AG04450 (cell line): ENCODE measurements at regions of chr1 and their contacts with region 1.

Region 1: GRCh38 chr1:63674238-63674864 is 81.1 kb downstream of the PGM1 start:
- DNase-seq: peak; percentile 74
- H3K4me3 ChIP-seq: no peak overlapping the region
- H3K27ac ChIP-seq: no peak overlapping the region
- H3K27me3 ChIP-seq: no peaks in the 10 kb centered on the region
- CTCF ChIP-seq: peak; percentile 85

Region 2: DNA sequence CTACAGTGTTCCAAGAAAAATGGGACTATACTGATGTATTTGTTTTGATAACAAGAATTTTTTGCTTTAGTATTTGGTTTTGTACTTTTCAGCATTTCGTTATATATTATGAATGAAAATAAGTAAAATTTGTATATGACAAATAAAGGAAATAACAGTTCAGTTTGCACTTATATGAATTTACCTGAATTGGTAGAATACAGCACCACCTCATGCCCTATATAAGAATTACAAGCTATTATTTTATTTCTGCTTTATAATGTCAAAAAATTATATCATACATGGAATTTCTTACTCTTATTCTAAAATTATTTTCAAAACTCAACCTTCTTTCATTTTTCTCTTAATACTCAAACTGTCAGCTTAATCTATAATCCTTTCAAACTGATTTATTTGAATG is 136.4 kb before region 1 on chr1:
- CTCF ChIA-PET with region 1: no interaction called
- POLR2A ChIA-PET with region 1: no interaction called
- DNase-seq: no peak
- H3K4me3 ChIP-seq: no peak overlapping the region
- H3K27ac ChIP-seq: no peak overlapping the region
- H3K27me3 ChIP-seq: no peaks in the 10 kb centered on the region
- CTCF ChIP-seq: peak; percentile 47

Region 3: GRCh38 chr1:63630666-63631065 is 43.7 kb before region 1 on chr1:
- CTCF ChIA-PET with region 1: no interaction called
- POLR2A ChIA-PET with region 1: no interaction called
- DNase-seq: no peak
- H3K4me3 ChIP-seq: no peak overlapping the region
- H3K27ac ChIP-seq: no peak overlapping the region
- H3K27me3 ChIP-seq: no peaks in the 10 kb centered on the region
- CTCF ChIP-seq: no peak

Region 4: DNA sequence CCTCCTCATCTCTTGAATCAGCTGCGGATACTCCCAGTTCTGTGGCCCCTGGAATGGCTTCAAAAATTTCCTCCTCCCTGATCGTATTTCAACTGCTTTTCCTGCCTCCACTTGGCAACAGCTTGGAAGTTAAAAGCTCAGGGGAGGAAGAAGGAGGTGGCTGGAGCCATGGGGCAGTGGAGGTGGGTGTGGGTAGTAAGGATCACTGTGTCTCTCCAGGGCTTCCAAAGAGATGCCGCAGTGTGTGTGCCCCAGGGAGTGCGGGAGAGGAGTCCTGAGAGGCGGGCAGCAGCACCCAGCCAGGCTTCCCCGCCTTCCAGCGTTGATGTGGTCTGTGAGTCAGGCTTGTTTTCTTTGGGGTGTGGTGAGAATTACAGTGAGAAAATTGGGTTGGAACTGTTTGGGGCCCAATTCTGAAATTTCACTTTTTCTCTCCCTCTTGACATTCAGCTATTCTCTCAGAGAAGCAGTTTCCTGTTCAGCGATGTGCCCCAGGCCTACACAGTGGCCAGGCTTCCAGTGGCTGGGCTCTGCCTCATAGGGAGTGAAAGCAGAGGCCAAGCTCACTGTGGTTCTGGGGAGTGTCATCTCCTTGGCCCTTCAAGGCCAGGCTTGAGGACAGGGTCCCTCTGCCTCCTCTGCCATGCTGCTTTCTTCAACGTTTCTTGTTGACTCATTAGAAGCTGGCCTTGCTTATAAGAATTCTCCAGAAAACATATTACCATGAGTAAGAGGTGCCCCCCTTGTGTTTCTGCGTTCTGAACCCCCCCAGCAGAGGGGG is 12.1 kb before region 1 on chr1:
- CTCF ChIA-PET with region 1: interaction called, 22 read pairs
- POLR2A ChIA-PET with region 1: interaction called, 4 read pairs
- DNase-seq: no peak
- H3K4me3 ChIP-seq: no peak overlapping the region
- H3K27ac ChIP-seq: peak overlapping the region; percentile 47
- H3K27me3 ChIP-seq: no peaks in the 10 kb centered on the region
- CTCF ChIP-seq: no peak

Region 5: GRCh38 chr1:63915121-63915520 is 240.8 kb after region 1 on chr1:
- CTCF ChIA-PET with region 1: interaction called, 18 read pairs
- POLR2A ChIA-PET with region 1: no interaction called
- DNase-seq: no peak
- H3K4me3 ChIP-seq: no peak overlapping the region
- H3K27ac ChIP-seq: no peak overlapping the region
- H3K27me3 ChIP-seq: peaks cover 17% of the 10 kb centered on the region
- CTCF ChIP-seq: peak; percentile 55